Spleen (tissue), 13 donors: ENCODE measurements at regions of chr7 and their contacts with region 1.

Region 1: DNA sequence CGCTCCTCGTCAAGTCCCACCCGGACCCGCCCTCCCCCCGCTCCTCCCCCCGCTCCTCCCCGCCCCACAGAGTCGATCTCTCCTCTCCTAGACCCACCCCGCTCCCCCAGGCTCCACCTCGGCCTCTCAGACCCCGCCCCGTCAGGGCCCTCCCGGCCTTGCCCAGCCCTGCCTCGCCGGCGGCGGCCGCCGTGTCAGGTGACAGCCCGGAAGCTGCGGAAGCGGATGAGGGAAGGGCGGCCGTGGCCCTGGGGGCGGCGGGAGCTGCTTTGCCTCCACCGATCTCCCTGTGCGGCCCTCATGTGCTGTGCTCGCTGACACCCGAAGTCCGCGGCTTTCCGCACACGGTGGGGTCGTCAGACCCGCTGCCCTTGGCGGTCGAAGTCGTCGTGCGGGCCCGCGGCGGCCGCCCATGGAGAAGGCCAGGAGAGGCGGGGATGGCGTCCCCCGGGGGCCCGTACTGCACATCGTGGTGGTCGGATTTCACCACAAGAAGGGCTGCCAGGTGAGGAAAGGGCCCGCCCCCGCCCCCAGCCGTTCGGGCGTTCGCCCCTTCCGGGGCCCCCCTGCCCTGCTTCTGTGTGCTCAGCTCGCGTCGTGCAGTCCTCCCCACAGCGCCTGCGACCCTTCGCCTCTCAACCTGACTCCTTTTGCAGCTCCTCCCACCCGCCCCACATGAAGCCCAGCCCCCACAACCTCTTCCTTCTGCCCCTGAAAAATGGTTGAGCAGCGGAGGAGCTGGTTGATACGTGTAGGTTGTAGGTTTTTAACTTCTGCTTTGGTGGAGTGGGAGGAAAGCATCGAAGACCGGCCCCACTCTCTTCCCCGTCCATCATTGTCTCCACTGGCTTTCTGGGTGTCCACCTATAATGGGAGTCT is at the start of gene AVL9:
- DNase-seq: peak; percentile 100
- H3K4me3 ChIP-seq: peak within 1 kb of the TSS; percentile 85 to 99 (median 92)
- H3K27ac ChIP-seq: peak within 1 kb of the TSS; percentile 97 to 99 (median 99)
- H3K4me1 ChIP-seq: peaks cover 11 to 72% (median 40%) of the 10 kb centered on the region in 6 donors
- H3K27me3 ChIP-seq: no peaks in the 10 kb centered on the region
- CTCF ChIP-seq: peak in 1 of 11 experiments; percentile 5
- POLR2A ChIP-seq: peak; percentile 62 to 80 (median 63)
- total RNA-seq, gene AVL9: 29.8 to 54.8 (median 36.7) TPM

Region 2: DNA sequence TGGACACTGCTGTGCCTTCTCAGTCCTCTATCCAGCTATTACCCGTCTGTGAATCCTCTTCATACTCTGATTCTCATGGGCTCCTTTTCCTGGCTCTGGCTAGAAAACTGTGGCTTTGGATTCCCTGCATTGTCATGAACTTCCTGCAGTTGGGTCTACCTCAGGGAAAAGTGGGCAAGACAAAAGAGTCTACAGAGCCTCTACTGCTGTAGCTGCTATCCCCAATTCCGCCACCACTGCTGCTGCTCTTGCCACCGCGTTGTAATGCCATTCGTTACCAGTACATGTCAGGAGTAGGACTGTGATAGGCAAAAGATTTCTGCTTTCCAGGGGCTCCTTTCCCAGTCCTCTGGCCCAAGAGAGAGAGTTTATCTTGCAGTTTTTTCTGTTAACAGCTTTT is 832.5 kb before region 1 on chr7:
- intact Hi-C with region 1: no loop called
- DNase-seq: no peak
- H3K4me3 ChIP-seq: no peak overlapping the region
- H3K27ac ChIP-seq: no peak overlapping the region
- H3K4me1 ChIP-seq: peaks cover 0 to 13% (median 3%) of the 10 kb centered on the region in 6 donors
- H3K27me3 ChIP-seq: no peaks in the 10 kb centered on the region
- CTCF ChIP-seq: no peak
- POLR2A ChIP-seq: no peak

Region 3: GRCh38 chr7:32559480-32559879 is 63.9 kb after region 1 on chr7:
- intact Hi-C with region 1: loop called (anchors 10 kb)
- DNase-seq: no peak
- H3K4me3 ChIP-seq: no peak overlapping the region
- H3K27ac ChIP-seq: no peak overlapping the region
- H3K4me1 ChIP-seq: peaks cover 0 to 8% (median 0%) of the 10 kb centered on the region in 6 donors
- H3K27me3 ChIP-seq: no peaks in the 10 kb centered on the region
- CTCF ChIP-seq: no peak
- POLR2A ChIP-seq: no peak